Cardiac septum (tissue), 1 donor: ENCODE measurements at regions of chr16 and their contacts with region 1.

Region 1: GRCh38 chr16:14186007-14186794 is 115.1 kb downstream of the MRTFB start:
- DNase-seq: peak; percentile 80

Region 2: DNA sequence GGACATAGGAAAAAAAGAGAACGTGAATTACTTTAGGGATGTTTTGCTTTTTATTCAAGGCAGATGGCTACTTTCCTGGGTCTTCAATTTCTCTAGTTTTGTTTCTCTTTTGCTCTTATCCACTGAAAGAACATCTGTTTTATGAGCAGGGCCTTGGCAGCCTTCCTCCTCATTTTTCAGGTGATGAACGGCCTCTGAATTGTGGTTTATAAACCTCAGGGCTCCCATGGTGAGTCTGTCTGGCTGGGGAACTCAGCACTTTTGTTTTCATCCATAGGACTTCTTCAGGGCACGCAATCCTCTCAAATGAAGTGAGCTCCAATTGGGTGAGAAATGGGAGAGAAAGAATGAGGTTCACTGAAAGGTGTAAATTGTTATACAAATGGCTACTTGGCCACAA is 452.7 kb before region 1 on chr16:
- intact Hi-C with region 1: no loop called
- DNase-seq: no peak

Region 3: DNA sequence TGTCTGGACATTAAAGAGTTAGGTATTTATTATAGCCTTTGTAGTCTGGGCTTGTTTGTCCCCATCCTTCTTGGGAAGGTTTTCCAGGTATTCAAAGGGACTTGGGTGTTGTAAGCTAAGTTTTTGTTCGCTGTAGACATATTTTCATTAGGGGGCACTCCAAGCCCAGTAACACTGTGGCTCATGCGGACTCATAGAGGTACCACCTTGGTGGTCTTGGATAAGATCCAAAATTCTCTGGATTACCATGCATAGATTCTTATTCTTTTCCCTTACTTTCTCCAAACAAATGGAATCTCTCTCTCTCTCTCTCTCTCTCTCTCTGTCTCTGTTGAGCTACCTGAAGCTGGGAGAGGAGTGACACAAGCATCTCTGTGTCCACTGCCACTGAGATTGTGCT is 217.4 kb before region 1 on chr16:
- intact Hi-C with region 1: no loop called
- DNase-seq: no peak

Region 4: GRCh38 chr16:13997933-13998332 is 188.3 kb before region 1 on chr16:
- intact Hi-C with region 1: loop called (anchors 5 kb)
- DNase-seq: no peak

Region 5: GRCh38 chr16:14070877-14071575 is 115.2 kb before region 1 on chr16 and contains the start of gene MRTFB:
- intact Hi-C with region 1: loop called (anchors 5 kb)
- DNase-seq: peak; percentile 85
- total RNA-seq, gene MRTFB: 25.7 TPM

Region 6: GRCh38 chr16:14088155-14088753 is 97.9 kb before region 1 on chr16:
- intact Hi-C with region 1: loop called (anchors 5 kb)
- DNase-seq: no peak

Region 7: DNA sequence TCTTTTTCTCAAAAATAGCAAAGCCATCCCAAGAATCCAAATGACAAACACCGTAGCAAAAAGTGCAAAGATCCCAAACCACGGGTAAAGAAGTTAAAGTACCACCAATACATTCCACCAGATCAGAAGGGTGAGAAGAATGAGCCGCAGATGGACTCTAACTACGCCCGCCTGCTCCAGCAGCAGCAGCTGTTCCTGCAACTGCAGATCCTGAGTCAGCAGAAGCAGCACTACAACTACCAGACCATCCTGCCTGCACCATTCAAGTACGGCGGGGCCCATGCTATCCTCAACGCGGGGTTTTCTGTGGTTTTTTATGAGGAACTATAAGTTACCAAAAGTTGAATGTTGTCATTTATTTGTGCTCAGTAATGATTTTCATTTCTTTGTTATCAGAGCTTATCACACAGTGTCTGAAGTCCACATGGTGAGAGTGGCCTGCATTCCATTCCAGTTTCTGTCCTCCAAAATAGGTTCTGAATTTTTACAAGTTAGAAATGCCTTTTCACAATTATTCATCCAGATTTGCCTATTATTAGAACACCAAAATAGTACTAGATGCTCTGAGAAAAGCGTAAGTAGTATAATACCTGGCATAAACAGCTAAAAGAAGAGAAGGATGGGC is 54.1 kb after region 1 on chr16:
- intact Hi-C with region 1: no loop called
- DNase-seq: no peak

Region 8: DNA sequence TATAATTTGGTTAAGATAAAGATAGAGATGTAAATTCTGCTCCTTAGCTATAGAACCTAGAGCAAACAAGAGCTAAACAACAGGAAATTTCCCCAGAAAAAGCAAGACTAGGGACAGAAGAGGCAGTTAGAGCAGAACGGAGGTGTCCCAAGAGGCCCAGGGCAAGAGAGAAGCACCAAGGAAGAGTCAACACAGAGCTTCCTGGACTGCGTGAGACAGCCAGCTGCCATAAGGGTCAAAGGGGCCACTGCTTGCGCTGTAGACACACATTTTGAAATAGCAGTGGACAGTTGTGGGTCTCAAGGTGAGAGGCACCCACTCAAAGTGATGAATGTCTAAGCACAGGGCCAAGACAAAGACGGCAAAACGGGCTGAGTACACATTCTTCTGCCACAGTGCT is 287.3 kb after region 1 on chr16:
- intact Hi-C with region 1: no loop called
- DNase-seq: no peak